Heart right ventricle (tissue), 16 donors: ENCODE measurements at regions of chr3 and their contacts with region 1.

Region 1: DNA sequence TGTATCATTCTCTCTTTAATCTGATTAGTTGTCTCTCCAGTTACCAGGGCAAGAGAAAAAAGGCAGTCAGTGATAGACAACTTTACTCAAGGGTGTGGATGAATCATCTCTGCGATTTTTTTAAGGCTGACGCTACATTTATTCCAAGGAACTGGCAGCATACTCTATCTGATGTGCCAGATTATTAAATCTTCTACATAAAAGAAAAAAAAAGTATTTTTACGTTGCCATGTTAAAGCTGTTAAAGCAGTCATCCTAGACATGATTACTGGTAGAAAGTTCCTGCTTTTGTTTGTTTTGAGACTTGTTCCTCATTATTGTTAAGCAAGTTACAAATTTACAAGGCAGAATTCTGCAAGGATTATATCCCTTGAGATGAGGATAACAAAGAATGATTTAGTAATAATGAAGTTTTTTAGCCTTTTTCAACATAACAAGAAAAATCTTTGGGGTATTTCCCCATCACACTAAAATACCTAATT is 121.7 kb downstream of the CBLB start:
- DNase-seq: no peak
- ATAC-seq: peak in 7 of 8 donors; percentile 38 to 79 (median 69)
- H3K4me3 ChIP-seq: no peak overlapping the region
- H3K27ac ChIP-seq: peak overlapping the region in 4 of 10 donors; percentile 1 to 74 (median 34)
- H3K4me1 ChIP-seq: peaks cover 0 to 64% (median 20%) of the 10 kb centered on the region in 9 donors
- H3K27me3 ChIP-seq: no peaks in the 10 kb centered on the region
- CTCF ChIP-seq: no peak

Region 2: DNA sequence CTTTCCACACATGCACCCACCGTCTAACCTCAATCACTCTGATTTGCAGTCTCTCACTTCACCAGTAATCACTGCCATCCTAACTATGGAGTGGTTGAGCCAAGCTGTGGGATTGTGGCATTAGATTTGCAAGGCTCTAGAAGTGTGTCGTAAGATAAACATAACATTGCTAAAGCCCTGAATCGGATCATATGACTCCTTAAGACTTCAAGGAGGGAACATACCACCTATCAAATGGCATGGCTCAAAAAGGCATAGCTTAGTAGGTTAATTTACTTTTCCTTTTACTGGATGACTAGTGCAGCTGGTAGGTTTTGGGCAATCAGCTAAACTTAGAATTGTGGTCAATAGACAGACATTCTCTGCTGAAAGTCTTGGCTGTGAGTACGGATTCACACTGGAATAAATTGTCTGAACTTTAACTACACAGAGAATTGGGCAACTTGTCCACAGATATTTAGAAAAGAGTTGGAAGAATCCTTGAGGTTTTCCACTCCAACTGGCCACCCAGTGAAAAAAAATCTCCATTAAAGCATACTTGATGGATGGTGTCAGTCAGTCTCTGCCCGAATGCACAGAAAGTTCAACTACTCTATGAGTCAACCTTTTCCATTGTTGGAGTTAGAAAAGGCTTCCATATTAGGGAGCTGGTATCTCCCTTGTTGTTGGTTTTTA is 598.4 kb after region 1 on chr3:
- intact Hi-C with region 1: loop called in 1 of 10 experiments (anchors 10 kb)
- DNase-seq: no peak
- ATAC-seq: peak in 1 of 8 donors; percentile 35
- H3K4me3 ChIP-seq: no peak overlapping the region
- H3K27ac ChIP-seq: no peak overlapping the region
- H3K4me1 ChIP-seq: peaks cover 0 to 16% (median 0%) of the 10 kb centered on the region in 9 donors
- H3K27me3 ChIP-seq: no peaks in the 10 kb centered on the region
- CTCF ChIP-seq: no peak